SK-N-SH (cell line): ENCODE measurements at regions of chr16 and their contacts with region 1.

Region 1: DNA sequence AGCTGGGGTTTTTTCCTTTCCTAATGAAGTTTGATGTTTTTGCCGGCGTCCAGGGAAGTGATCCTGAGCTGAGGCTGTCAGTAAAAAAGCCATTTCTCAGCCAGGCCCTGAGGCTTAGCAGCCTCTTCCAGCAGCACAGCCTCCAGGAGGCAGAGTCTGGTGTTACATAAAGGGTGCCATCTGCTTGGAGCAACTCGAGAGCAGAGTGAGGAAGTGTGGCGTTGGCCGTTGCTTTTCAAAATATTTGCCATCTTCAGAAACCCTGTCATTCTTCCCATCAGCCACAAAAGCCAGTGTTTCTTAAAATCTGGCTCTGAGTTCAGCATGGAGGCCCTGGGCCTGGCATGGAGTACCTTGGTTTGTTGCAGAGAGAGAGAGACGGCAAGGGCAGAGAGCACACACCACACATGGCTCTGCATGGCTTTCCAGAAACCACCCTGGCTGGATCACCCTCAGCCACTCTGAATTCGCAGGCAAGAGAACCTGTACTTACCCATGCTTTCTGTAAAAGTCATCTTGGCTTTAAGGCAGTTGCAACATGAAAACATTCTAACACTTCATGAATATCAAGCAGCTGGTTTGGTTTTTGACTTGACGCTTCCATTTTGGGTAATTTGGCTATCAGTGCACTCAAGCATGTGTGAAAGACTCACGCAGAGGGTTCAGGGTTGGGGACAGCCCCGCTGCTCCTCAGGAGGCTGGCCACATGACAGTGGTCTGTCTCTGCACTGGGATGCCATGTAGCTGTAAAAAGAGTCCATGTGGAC is 21.0 kb downstream of the PMM2 start:
- DNase-seq: no peak
- H3K4me3 ChIP-seq: no peak overlapping the region
- H3K27ac ChIP-seq: peak overlapping the region in 1 of 2 experiments; percentile 17; a peak in 1 of 4 replicates
- H3K4me1 ChIP-seq: peaks cover 0 to 12% of the 10 kb centered on the region in 2 experiments; a peak in 3 of 4 replicates
- H3K27me3 ChIP-seq: no peaks in the 10 kb centered on the region
- CTCF ChIP-seq: no peak
- EP300 ChIP-seq: no peak
- RAD21 ChIP-seq: no peak

Region 2: DNA sequence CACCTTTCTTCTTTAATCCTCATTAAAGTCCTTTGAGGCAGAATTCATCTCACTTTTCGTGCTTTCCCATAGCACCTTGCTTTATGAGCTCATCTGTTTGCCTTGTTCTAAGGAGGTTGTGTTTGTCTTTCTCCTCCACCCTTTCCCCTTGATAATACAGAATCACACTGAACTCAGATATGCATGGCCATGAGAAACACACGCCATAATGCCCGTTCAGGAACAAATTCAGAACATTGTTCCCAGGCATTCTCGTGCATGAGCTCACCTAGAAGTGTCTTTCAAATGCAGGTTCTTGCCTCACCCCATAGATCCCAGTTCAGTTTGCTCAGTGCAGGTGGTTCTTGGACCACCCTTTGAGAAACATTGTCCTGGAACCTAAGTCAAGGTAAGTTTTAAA is 299.5 kb before region 1 on chr16:
- CTCF ChIA-PET with region 1: no interaction called
- POLR2A ChIA-PET with region 1: no interaction called
- DNase-seq: no peak
- H3K4me3 ChIP-seq: no peak overlapping the region
- H3K27ac ChIP-seq: no peak overlapping the region
- H3K4me1 ChIP-seq: no peaks in the 10 kb centered on the region; a peak in 1 of 4 replicates
- H3K27me3 ChIP-seq: no peaks in the 10 kb centered on the region
- CTCF ChIP-seq: no peak
- EP300 ChIP-seq: no peak
- RAD21 ChIP-seq: no peak

Region 3: DNA sequence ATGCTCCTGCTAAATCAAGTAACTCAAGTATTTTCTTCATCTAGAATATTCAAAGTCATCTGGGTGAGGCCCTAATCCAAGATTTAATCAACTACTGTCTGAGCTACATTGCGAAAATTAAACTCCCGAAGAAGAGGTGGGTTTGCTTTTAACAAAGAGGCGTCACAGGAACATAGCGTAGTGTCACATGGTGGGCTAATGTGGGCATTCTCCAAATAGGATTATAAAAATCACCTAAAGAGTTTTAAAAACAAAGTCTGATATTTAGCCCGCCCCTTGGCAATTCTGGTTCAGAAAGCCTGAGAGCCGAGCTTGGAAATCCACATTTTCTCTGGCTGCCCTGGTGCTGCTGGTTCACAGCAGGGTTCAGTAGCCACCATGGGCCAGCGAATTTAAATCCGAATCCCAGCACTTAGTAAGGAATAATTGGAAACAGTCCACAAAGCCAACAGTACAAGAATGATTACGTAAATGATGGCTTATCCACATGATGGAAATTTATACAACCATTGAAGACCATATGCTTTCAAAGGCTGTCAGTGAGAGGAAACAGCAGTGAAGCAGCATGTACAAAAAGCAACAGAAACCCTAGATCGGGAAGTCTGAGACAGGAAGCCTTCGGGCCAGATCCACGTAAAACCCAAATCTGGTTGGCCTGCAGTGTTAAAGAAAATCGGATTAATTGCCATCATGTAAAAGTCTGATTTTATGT is 12.3 kb before region 1 on chr16:
- CTCF ChIA-PET with region 1: interaction called, 15 read pairs
- POLR2A ChIA-PET with region 1: interaction called, 12 read pairs
- DNase-seq: peak; percentile 56
- H3K4me3 ChIP-seq: no peak overlapping the region
- H3K27ac ChIP-seq: peak overlapping the region in 1 of 2 experiments; percentile 88; a peak in 2 of 4 replicates
- H3K4me1 ChIP-seq: peaks cover 0 to 32% of the 10 kb centered on the region in 2 experiments; a peak in 1 of 4 replicates
- H3K27me3 ChIP-seq: no peaks in the 10 kb centered on the region
- CTCF ChIP-seq: no peak
- EP300 ChIP-seq: peak in 1 of 2 experiments; percentile 72; a peak in 1 of 4 replicates
- RAD21 ChIP-seq: peak; percentile 34; the same call in 1 of the 2 replicates

Region 4: DNA sequence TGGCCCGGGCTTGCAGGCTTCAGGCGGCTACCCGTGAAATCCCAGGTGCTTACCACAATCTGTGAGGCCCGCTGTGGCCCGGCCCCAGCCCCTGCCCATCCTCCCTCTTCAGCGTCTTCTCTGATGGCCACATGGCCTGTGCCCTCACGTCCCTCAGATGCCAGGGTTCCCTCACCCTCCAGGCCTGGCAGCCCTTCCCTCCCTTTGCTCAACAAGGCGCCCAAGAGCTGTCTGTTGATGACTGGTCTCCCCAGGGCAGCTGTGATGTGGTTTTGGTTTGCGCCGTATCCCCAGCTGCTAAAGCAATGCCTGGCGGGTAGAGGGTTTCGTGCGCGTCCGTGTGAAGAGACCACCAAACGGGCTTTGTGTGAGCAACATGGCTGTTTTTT is 14.0 kb after region 1 on chr16:
- CTCF ChIA-PET with region 1: no interaction called
- POLR2A ChIA-PET with region 1: no interaction called
- DNase-seq: no peak
- H3K4me3 ChIP-seq: no peak overlapping the region
- H3K27ac ChIP-seq: no peak overlapping the region
- H3K4me1 ChIP-seq: peaks cover 0 to 2% of the 10 kb centered on the region in 2 experiments; a peak in 2 of 4 replicates
- H3K27me3 ChIP-seq: no peaks in the 10 kb centered on the region
- CTCF ChIP-seq: no peak
- EP300 ChIP-seq: no peak
- RAD21 ChIP-seq: no peak

Region 5: GRCh38 chr16:9081843-9082242 is 263.2 kb after region 1 on chr16:
- CTCF ChIA-PET with region 1: no interaction called
- POLR2A ChIA-PET with region 1: no interaction called
- DNase-seq: no peak
- H3K4me3 ChIP-seq: no peak overlapping the region
- H3K27ac ChIP-seq: no peak overlapping the region
- H3K4me1 ChIP-seq: peaks cover 4 to 5% of the 10 kb centered on the region in 2 experiments; a peak in 1 of 4 replicates
- H3K27me3 ChIP-seq: no peaks in the 10 kb centered on the region
- CTCF ChIP-seq: no peak
- EP300 ChIP-seq: no peak
- RAD21 ChIP-seq: no peak